ENCODE measurements at regions of chrX and their contacts with region 1.

Region 1: DNA sequence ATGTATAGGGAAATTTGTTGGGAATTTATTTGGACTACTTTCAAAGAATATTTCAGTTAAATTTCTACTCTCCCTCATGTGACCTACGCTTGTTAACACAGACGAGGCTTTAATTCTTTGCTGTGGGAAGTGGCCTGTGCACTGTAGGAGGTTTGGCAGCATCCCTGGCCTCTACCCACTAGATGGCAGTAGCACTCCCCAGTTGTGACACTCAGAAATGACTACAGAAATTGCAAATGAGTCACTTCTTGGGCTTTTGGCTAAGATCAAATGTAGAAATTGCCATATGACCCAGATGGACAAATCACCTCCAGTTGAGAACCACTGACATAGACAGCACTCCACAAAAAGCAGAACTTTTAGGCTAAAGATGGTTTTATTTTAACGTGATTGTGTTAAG is 22.1 kb downstream of the PIR start:
- H3K4me3 Mint-ChIP-seq: no peak overlapping the region
- H3K27ac Mint-ChIP-seq: no peak overlapping the region
- H3K4me1 Mint-ChIP-seq: no peaks in the 10 kb centered on the region
- H3K27me3 Mint-ChIP-seq: no peaks in the 10 kb centered on the region

Region 2: GRCh38 chrX:15299941-15300851 is 170.8 kb before region 1 on chrX:
- intact Hi-C with region 1: loop called (anchors 2 kb)
- H3K4me3 Mint-ChIP-seq: no peak overlapping the region
- H3K27ac Mint-ChIP-seq: no peak overlapping the region
- H3K4me1 Mint-ChIP-seq: peaks cover 33% of the 10 kb centered on the region
- H3K27me3 Mint-ChIP-seq: no peaks in the 10 kb centered on the region

Region 3: GRCh38 chrX:15349046-15349445 is 122.0 kb before region 1 on chrX:
- intact Hi-C with region 1: loop called (anchors 1 kb)
- H3K4me3 Mint-ChIP-seq: no peak overlapping the region
- H3K27ac Mint-ChIP-seq: no peak overlapping the region
- H3K4me1 Mint-ChIP-seq: peaks cover 16% of the 10 kb centered on the region
- H3K27me3 Mint-ChIP-seq: peaks cover 11% of the 10 kb centered on the region

Region 4: GRCh38 chrX:15511563-15511962 is 40.5 kb after region 1 on chrX:
- intact Hi-C with region 1: no loop called
- H3K4me3 Mint-ChIP-seq: no peak overlapping the region
- H3K27ac Mint-ChIP-seq: no peak overlapping the region
- H3K4me1 Mint-ChIP-seq: no peaks in the 10 kb centered on the region
- H3K27me3 Mint-ChIP-seq: no peaks in the 10 kb centered on the region

Region 5: GRCh38 chrX:15564981-15565579 is 94.1 kb after region 1 on chrX:
- intact Hi-C with region 1: loop called (anchors 1 kb)
- H3K4me3 Mint-ChIP-seq: no peak overlapping the region
- H3K27ac Mint-ChIP-seq: no peak overlapping the region
- H3K4me1 Mint-ChIP-seq: no peaks in the 10 kb centered on the region
- H3K27me3 Mint-ChIP-seq: no peaks in the 10 kb centered on the region

Region 6: DNA sequence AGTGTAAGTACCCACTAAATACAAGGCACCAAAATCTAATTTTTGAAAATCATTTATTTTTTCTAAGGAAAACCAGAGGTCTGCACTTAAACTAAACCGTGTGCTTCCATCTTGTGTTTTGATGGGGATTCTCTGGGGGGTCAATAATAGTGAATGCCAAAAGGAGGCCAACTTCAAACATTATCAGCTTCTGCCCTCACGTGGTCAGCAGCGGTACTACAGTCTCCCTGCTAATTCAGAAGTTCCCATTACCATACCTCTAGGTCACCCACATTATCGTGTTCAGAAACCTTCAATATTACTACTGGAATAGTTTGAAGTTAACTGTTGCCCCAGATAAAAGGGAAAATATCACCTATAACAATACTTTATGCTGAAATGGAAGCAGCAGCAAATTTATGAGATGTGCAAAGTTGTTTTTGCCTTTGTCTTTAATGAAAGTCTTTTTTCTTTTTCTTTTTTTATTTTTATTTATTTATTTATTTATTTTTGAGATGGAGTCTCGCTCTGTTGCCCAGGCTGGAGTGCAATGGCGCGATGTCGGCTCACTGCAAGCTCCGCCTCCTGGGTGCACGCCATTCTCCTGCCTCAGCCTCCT is 1224.2 kb after region 1 on chrX:
- intact Hi-C with region 1: loop called (anchors 10 kb)
- H3K4me3 Mint-ChIP-seq: no peak overlapping the region
- H3K27ac Mint-ChIP-seq: no peak overlapping the region
- H3K4me1 Mint-ChIP-seq: no peaks in the 10 kb centered on the region
- H3K27me3 Mint-ChIP-seq: no peaks in the 10 kb centered on the region

Measured in dendritic cell treated with granulocyte-macrophage colony-stimulating factor and Interleukin-4, amounts not matched to agents 40 ng/mL and 50 ng/mL, for 4 days (primary cell).